ENCODE measurements at regions of chr12 and their contacts with region 1.

Region 1: GRCh38 chr12:12334367-12335040 is 15.5 kb downstream of the MANSC1 start:
- DNase-seq: no peak
- H3K4me3 ChIP-seq: no peak overlapping the region
- CTCF ChIP-seq: peak; percentile 78

Region 2: DNA sequence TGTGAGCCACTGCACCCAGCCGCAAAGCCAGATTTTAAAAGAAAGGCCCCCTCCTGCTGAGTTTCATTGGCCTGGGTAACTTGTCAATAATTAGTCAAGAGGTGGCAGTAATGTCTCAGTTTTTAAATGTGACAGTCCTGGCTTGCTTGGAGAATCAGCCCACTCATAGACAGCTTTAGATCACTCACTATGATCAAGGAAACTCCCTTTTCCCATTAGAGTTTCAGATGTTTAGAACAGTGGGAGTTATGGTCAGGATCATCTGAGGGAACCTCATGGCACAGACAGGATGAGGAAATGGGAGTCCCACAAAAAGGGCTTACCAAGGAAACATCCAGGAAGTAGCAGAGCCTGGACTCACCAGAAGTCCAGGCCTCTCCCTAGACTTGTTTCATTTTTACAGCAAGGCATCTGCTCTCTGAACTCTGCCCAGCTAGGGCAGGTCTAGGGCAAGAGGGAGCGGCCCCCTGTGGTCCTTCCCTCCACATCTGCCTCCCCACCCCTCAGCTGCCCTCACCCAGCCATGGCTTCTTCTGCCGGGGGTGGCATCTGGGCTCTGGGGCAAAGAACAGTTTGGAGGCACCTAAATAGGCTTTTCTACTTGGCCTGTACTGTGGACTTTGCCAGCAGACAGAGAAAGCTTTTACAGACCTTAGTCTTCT is 252.5 kb before region 1 on chr12:
- in situ Hi-C with region 1: loop called (anchors 25 kb)
- DNase-seq: peak; percentile 4
- H3K4me3 ChIP-seq: no peak overlapping the region
- CTCF ChIP-seq: peak; percentile 17

Region 3: DNA sequence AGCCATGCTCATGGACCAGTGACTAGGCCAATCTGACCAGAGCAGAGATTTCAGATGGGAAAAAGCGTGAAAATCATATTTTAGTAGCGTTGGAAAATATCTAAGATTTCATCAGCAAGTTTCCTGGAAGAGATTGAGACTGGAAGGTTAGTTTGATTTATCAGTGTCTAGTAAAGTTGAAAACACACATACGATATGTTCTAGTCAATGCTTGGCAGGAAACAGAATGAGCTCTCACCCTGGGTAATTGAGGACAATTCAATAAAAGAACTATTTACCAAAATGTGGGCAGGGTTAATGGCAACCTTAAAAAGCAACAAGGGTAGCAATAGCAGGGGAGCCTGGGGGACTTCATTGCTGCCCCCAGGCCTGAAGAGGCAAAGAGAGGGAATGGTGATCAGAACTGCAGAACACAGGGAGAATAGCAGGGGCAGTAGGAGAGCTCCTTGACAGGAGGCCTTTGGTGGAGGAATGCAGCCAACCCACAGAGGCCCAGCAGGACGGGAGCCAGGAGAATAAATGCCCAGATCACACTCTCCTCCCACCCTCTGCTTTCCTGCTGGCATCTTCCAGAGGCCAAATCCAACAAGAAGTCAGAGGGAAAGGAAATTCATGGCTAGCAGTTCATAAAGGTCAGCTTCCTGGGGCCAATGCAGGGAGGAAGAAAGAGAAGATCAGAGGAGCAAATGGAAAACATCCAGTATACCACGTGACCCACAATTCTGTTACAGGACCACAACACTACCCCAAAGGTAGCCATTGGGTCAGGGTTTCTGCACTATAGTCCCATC is 40.1 kb before region 1 on chr12:
- in situ Hi-C with region 1: no loop called
- DNase-seq: peak; percentile 32
- H3K4me3 ChIP-seq: no peak overlapping the region
- CTCF ChIP-seq: no peak

Region 4: DNA sequence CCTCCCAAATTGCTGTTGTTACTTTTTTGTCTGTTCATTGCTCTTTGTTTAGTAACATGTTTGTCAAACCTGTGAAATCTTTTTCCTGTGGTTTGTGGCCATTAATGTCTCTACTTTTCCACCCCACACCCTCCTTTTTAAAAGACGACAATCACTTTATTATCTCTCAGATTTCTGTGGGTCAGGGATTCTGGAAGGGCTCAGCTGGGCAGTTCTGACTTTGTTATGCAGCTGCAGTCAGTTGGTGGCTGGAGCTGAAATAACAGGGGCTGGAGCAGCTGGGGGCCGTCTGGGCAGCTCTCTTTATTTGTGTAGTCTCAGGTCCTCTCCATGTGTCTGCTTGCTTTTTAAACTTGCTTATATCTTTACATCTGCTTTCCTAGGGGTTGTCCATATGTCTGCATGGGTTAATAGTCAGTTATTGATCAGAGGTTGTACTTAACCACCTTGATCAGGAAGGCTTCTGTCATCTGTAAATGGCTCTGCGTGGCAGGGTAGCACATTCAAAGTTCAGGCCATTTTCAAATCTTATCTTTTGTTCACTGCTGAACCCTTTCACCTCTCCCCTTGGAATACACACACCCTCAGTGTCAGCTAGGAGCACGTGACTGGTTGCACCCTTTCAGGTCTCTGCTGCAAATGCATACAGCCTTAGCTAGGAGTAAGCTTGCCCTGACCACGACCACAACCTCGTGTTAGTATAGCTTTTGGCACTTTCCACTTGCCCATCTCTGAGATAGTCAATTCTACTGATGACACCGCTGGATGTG is 50.3 kb after region 1 on chr12:
- in situ Hi-C with region 1: no loop called
- DNase-seq: no peak
- H3K4me3 ChIP-seq: no peak overlapping the region
- CTCF ChIP-seq: no peak

Measured in astrocyte of the cerebellum (primary cell).